B cell (primary cell): ENCODE measurements at regions of chr16 and their contacts with region 1.

Region 1: DNA sequence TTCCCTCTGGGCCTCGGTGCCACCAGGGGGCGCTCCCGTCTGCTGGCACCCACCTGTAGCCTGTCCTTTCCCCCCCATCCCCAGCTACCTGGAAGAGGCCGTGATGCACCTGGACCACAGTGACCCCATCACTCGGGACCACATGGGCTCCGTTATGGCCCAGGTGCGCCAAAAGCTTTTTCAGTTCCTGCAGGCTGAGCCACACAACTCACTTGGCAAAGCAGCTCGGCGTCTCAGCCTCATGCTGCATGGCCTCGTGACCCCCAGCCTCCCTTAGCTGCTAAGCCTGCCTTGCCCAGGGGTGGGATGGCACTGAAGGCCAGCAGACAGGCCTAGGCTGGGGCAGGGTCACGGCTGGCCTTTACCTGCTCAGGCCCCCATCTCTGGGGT is 818 bp upstream of the NRN1L start:
- DNase-seq: peak; percentile 81
- ATAC-seq: peak; percentile 88
- H3K4me3 ChIP-seq: no peak overlapping the region
- H3K4me3 Mint-ChIP-seq: no peak overlapping the region
- H3K27ac ChIP-seq: no peak overlapping the region
- H3K27ac Mint-ChIP-seq: no peak overlapping the region
- H3K4me1 ChIP-seq: no peaks in the 10 kb centered on the region
- H3K4me1 Mint-ChIP-seq: no peaks in the 10 kb centered on the region
- H3K27me3 ChIP-seq: no peaks in the 10 kb centered on the region
- H3K27me3 Mint-ChIP-seq: no peaks in the 10 kb centered on the region
- CTCF ChIP-seq: peak; percentile 96

Region 2: DNA sequence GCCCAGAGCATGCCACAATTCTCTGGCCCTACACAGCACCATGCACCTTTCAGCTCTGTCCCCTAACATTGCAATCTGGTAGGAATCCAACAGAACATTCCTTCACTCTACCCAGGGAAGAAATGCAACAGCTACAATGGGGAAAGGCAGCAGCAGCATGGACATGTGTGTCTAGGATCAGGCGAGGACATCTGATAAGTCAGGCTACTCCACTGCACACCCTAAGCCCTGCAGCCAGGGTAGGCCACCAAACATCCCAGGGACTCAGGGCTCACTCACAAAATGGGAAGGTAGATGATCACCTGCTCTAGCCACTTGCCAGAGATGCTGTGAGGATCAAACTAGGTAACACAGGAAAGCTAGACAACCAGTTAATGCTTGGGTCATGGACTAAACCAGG is 82.6 kb before region 1 on chr16:
- CTCF ChIA-PET with region 1: no interaction called
- POLR2A ChIA-PET with region 1: no interaction called
- intact Hi-C with region 1: no loop called
- DNase-seq: no peak
- ATAC-seq: no peak
- H3K4me3 ChIP-seq: no peak overlapping the region
- H3K4me3 Mint-ChIP-seq: peak overlapping the region; percentile 79
- H3K27ac ChIP-seq: no peak overlapping the region
- H3K27ac Mint-ChIP-seq: peak overlapping the region; percentile 68
- H3K4me1 ChIP-seq: peaks cover 56 to 60% of the 10 kb centered on the region in 2 donors
- H3K4me1 Mint-ChIP-seq: peaks cover 75% of the 10 kb centered on the region
- H3K27me3 ChIP-seq: no peaks in the 10 kb centered on the region
- H3K27me3 Mint-ChIP-seq: no peaks in the 10 kb centered on the region
- CTCF ChIP-seq: no peak

Region 3: DNA sequence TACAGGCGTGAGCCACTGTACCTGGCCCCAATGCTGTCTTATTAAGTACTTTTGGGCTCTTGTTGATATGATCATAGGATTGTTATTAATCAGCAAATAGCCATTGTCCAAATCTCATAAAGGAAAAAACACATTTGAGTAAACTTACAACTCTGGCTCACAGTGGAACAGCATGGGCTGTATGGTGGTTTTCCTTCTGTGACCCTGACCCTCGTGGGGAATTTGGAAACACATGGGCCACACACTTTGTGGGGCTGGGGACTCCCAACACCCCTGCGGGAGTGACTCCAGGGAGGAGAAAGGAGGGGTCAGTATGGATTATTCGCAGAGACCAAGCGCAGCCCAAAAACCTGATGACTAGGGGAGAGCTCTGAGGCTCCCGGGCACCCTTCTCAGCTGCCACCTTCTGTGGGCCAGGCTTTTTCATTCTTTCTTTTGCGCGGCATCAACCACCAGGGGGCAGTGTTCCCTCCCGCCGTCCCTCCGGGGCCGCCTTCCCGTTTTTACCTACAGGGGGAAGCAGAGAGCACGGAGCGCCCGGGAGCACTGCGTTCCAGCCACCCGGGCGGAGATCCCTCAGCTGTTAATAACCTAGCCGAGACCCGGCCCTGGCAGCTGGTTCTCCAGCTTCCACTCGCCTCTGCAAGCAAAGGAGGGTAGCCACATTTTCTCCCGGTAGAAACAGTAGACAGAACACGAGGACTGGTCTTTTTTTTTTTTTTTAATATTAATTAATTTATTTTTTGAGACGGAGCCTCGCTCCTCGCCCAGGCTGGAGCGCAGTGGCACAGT is 67.4 kb before region 1 on chr16:
- CTCF ChIA-PET with region 1: interaction called, 13 read pairs
- POLR2A ChIA-PET with region 1: no interaction called
- intact Hi-C with region 1: no loop called
- DNase-seq: peak; percentile 92
- ATAC-seq: peak; percentile 99
- H3K4me3 ChIP-seq: no peak overlapping the region
- H3K4me3 Mint-ChIP-seq: peak overlapping the region; percentile 65
- H3K27ac ChIP-seq: no peak overlapping the region
- H3K27ac Mint-ChIP-seq: peak overlapping the region; percentile 59
- H3K4me1 ChIP-seq: peaks cover 0 to 7% of the 10 kb centered on the region in 2 donors
- H3K4me1 Mint-ChIP-seq: peaks cover 6% of the 10 kb centered on the region
- H3K27me3 ChIP-seq: no peaks in the 10 kb centered on the region
- H3K27me3 Mint-ChIP-seq: no peaks in the 10 kb centered on the region
- CTCF ChIP-seq: peak; percentile 100

Region 4: DNA sequence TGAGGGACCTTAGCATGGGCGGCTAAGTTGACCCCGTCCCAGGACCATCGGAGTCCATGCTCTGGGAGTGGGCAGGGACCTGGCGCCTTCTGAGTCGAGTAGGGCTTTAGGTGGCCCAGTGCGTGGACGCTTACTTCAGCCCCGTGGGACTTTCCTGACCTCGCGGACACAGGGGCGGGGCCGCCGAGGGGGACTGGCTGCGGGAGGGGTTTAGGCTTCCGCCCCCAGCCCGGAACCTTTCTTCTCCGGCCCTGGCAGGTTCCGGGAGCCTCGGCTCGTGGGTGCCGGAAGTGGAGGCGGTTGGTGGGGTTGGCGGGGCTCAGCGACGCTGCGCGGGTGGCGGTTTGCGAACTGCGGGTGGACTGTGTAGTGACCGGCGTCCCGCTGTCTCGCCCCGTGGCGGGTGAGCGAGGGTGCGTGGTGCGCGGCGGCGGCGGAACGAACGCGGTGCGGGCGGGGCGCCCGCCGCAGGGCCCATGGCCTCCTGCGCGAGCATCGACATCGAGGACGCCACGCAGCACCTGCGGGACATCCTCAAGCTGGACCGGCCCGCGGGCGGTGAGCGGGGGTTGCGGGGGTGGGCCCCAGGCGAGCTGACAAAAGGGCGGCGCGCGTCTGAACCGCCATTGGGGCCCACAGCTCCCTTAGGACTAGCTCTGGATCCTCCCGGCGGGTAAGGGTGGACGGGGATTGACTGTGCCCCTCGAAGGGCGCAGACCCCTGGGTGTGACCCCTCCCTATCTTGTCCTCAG is 10.9 kb before region 1 on chr16 and contains the start of gene EDC4:
- CTCF ChIA-PET with region 1: interaction called, 17 read pairs
- POLR2A ChIA-PET with region 1: no interaction called
- intact Hi-C with region 1: no loop called
- DNase-seq: peak; percentile 90
- ATAC-seq: peak; percentile 90
- H3K4me3 ChIP-seq: peak within 1 kb of the TSS; percentile 59 to 98 (median 88)
- H3K4me3 Mint-ChIP-seq: peak within 1 kb of the TSS; percentile 91
- H3K27ac ChIP-seq: peak within 1 kb of the TSS; percentile 74 to 81
- H3K27ac Mint-ChIP-seq: peak within 1 kb of the TSS; percentile 90
- H3K4me1 ChIP-seq: peaks cover 23 to 25% of the 10 kb centered on the region in 2 donors
- H3K4me1 Mint-ChIP-seq: peaks cover 37% of the 10 kb centered on the region
- H3K27me3 ChIP-seq: no peaks in the 10 kb centered on the region
- H3K27me3 Mint-ChIP-seq: no peaks in the 10 kb centered on the region
- CTCF ChIP-seq: no peak
- total RNA-seq, gene EDC4: 83.3 and 95.1 TPM in 2 replicates

Region 5: GRCh38 chr16:67942200-67942509 is 58.3 kb after region 1 on chr16:
- CTCF ChIA-PET with region 1: interaction called, 25 read pairs
- POLR2A ChIA-PET with region 1: interaction called, 3 read pairs
- intact Hi-C with region 1: no loop called
- DNase-seq: peak; percentile 50
- ATAC-seq: peak; percentile 67
- H3K4me3 ChIP-seq: no peak overlapping the region
- H3K4me3 Mint-ChIP-seq: no peak overlapping the region
- H3K27ac ChIP-seq: no peak overlapping the region
- H3K27ac Mint-ChIP-seq: no peak overlapping the region
- H3K4me1 ChIP-seq: peaks cover 15 to 33% of the 10 kb centered on the region in 2 donors
- H3K4me1 Mint-ChIP-seq: peaks cover 17% of the 10 kb centered on the region
- H3K27me3 ChIP-seq: no peaks in the 10 kb centered on the region
- H3K27me3 Mint-ChIP-seq: no peaks in the 10 kb centered on the region
- CTCF ChIP-seq: peak; percentile 71

Region 6: GRCh38 chr16:68040507-68041288 is 156.8 kb after region 1 on chr16:
- CTCF ChIA-PET with region 1: interaction called, 151 read pairs
- POLR2A ChIA-PET with region 1: interaction called, 12 read pairs
- intact Hi-C with region 1: loop called (anchors 1 kb)
- DNase-seq: peak; percentile 90
- ATAC-seq: peak; percentile 82
- H3K4me3 ChIP-seq: peak overlapping the region in 4 of 5 experiments; percentile 34 to 79 (median 52)
- H3K4me3 Mint-ChIP-seq: peak overlapping the region; percentile 85
- H3K27ac ChIP-seq: peak overlapping the region; percentile 14 to 82
- H3K27ac Mint-ChIP-seq: peak overlapping the region; percentile 94
- H3K4me1 ChIP-seq: peaks cover 46 to 56% of the 10 kb centered on the region in 2 donors
- H3K4me1 Mint-ChIP-seq: peaks cover 51% of the 10 kb centered on the region
- H3K27me3 ChIP-seq: no peaks in the 10 kb centered on the region
- H3K27me3 Mint-ChIP-seq: no peaks in the 10 kb centered on the region
- CTCF ChIP-seq: peak; percentile 84

Region 7: DNA sequence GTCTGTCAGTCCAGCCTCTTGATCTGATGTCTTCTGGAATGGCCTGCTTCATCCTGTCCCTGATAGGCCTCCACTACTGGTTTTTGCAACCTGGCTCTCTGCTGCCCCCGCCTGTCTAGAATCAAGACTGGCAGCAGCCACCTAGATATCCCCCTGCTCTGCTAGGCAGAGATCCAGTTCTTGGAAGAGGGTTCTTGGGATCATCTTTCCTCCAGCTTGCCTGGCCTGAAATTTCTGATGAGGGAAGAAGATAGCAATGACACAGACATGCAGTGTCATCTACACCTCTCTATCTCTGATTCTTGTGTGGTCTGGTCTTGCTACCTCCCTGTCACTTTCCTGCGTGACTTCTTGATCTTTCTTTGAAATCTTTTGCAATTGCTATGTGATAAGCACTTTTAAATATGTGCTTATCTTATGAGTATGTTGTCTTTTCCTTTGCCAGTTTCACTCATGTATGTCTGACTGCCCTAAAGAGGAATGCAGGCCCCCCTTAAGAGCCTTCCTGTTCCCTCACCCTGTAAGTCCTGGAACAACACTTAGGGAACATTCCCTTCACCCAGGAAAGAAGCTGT is 181.0 kb after region 1 on chr16:
- CTCF ChIA-PET with region 1: interaction called, 36 read pairs
- POLR2A ChIA-PET with region 1: no interaction called
- intact Hi-C with region 1: loop called (anchors 1 kb)
- DNase-seq: peak; percentile 74
- ATAC-seq: peak; percentile 93
- H3K4me3 ChIP-seq: no peak overlapping the region
- H3K4me3 Mint-ChIP-seq: no peak overlapping the region
- H3K27ac ChIP-seq: no peak overlapping the region
- H3K27ac Mint-ChIP-seq: peak overlapping the region; percentile 33
- H3K4me1 ChIP-seq: peaks cover 9 to 22% of the 10 kb centered on the region in 2 donors
- H3K4me1 Mint-ChIP-seq: peaks cover 23% of the 10 kb centered on the region
- H3K27me3 ChIP-seq: no peaks in the 10 kb centered on the region
- H3K27me3 Mint-ChIP-seq: no peaks in the 10 kb centered on the region
- CTCF ChIP-seq: peak; percentile 90

Region 8: GRCh38 chr16:68229431-68230198 is 345.7 kb after region 1 on chr16:
- CTCF ChIA-PET with region 1: interaction called, 62 read pairs
- POLR2A ChIA-PET with region 1: no interaction called
- intact Hi-C with region 1: loop called (anchors 1 kb)
- DNase-seq: peak; percentile 70
- ATAC-seq: peak; percentile 53
- H3K4me3 ChIP-seq: no peak overlapping the region
- H3K4me3 Mint-ChIP-seq: no peak overlapping the region
- H3K27ac ChIP-seq: no peak overlapping the region
- H3K27ac Mint-ChIP-seq: peak overlapping the region; percentile 82
- H3K4me1 ChIP-seq: peaks cover 27 to 28% of the 10 kb centered on the region in 2 donors
- H3K4me1 Mint-ChIP-seq: peaks cover 46% of the 10 kb centered on the region
- H3K27me3 ChIP-seq: no peaks in the 10 kb centered on the region
- H3K27me3 Mint-ChIP-seq: no peaks in the 10 kb centered on the region
- CTCF ChIP-seq: peak; percentile 96